ENCODE measurements at regions of chr22 and their contacts with region 1.

Region 1: GRCh38 chr22:19891317-19892256 is 36.9 kb upstream of the GNB1L start:
- DNase-seq: peak; percentile 85
- H3K4me3 ChIP-seq: peak overlapping the region in 1 of 3 experiments; percentile 23
- H3K27ac ChIP-seq: peak overlapping the region; percentile 18
- H3K4me1 ChIP-seq: peaks cover 51% of the 10 kb centered on the region
- H3K27me3 ChIP-seq: no peaks in the 10 kb centered on the region
- CTCF ChIP-seq: no peak

Region 2: GRCh38 chr22:19824197-19825015 is 67.2 kb before region 1 on chr22:
- CTCF ChIA-PET with region 1: no interaction called
- dilution Hi-C with region 1: loop called (anchors 5 kb)
- in situ Hi-C with region 1: no loop called
- intact Hi-C with region 1: no loop called
- DNase-seq: no peak
- H3K4me3 ChIP-seq: no peak overlapping the region
- H3K27ac ChIP-seq: peak overlapping the region; percentile 41
- H3K4me1 ChIP-seq: peaks cover 22% of the 10 kb centered on the region
- H3K27me3 ChIP-seq: no peaks in the 10 kb centered on the region
- CTCF ChIP-seq: no peak

Region 3: DNA sequence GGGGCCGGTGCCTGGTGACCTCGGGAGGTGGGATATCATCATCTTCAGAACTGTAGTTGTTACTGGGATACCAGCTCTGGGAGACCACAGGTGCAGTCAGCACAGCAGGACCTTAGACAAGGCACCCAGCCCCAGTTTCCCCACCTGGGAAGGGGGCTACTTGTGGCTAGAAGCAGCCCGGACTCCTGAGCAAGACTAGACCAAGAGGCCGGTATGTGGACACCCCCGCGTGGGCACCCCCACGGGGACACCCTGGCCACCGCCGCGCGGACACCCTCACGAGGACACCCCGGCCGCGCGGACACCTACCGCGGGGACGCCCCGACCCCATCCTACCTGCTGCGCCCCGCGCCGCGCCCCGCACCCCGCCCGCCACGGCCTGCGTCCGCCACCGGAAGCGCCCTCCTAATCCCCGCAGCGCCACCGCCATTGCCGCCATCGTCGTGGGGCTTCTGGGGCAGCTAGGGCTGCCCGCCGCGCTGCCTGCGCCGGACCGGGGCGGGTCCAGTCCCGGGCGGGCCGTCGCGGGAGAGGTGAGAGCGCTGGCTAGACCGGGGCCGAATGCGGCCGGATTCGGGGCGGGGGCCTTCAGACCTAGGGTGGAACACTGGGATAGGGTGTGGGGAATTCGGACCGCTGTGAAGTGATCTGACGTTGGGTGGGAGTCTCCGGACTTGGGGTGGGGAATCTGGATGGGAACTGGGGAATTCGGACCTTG is 49.9 kb after region 1 on chr22 and contains the starts of genes COMT and TXNRD2:
- CTCF ChIA-PET with region 1: no interaction called
- dilution Hi-C with region 1: no loop called
- in situ Hi-C with region 1: no loop called
- intact Hi-C with region 1: loop called (anchors 5 kb)
- DNase-seq: peak; percentile 54
- H3K4me3 ChIP-seq: peak within 1 kb of the TSS; percentile 64 to 71 (median 70)
- H3K27ac ChIP-seq: peak within 1 kb of the TSS; percentile 80
- H3K4me1 ChIP-seq: peaks cover 28% of the 10 kb centered on the region
- H3K27me3 ChIP-seq: no peaks in the 10 kb centered on the region
- CTCF ChIP-seq: no peak
- total RNA-seq, gene COMT: 180 to 193 TPM
- total RNA-seq, gene TXNRD2: 13.2 to 22.1 TPM

Region 4: DNA sequence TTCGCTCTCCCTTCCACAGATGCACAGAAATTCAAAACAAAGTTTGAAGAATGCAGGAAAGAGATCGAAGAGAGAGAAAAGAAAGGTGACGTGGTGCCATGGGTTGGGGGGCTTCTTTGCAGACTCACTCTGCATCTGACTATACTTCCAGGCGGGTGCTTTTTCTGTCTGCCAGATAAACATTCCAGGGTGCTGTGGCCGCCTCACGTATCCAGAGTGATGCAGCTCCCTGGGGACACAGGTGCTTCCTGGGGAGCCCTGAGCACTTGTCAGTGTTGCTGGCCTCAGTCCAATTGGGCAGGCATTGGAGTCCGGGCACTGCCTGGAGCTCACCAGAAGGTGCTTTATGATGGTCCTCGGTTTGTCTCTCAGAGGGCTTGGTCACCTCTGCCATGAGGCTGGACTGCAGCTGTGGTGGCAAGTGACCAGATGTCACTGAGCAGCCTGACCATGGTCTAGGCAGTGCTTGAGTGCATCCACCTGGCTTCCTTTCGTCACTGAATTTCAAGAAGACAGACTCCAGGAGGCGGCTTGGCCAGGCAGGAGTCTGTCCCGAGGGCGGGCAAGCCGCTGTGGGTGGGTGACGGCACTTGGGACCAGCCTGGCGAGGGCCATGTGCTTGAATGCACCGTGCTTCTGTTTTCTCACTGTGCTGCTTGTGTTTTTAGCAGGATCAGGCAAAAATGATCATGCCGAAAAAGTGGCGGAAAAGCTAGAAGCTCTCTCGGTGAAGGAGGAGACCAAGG is 234.9 kb after region 1 on chr22:
- CTCF ChIA-PET with region 1: no interaction called
- dilution Hi-C with region 1: no loop called
- in situ Hi-C with region 1: no loop called
- intact Hi-C with region 1: no loop called
- DNase-seq: no peak
- H3K4me3 ChIP-seq: no peak overlapping the region
- H3K27ac ChIP-seq: no peak overlapping the region
- H3K4me1 ChIP-seq: no peaks in the 10 kb centered on the region
- H3K27me3 ChIP-seq: no peaks in the 10 kb centered on the region
- CTCF ChIP-seq: no peak